ENCODE measurements at regions of chr12 and their contacts with region 1.

Region 1: GRCh38 chr12:13734584-13735152 is 246.7 kb downstream of the GRIN2B start:
- DNase-seq: no peak

Region 2: GRCh38 chr12:13973996-13974395 is 239.3 kb after region 1 on chr12:
- intact Hi-C with region 1: loop called (anchors 5 kb)
- DNase-seq: no peak

Measured in posterior cingulate gyrus (tissue), 11 donors.